Left cardiac atrium (tissue), 4 donors: ENCODE measurements at regions of chr7 and their contacts with region 1.

Region 1: GRCh38 chr7:158818325-158819213 is 10.7 kb downstream of the ESYT2 start:
- DNase-seq: peak; percentile 94
- ATAC-seq: peak; percentile 82 to 92

Region 2: DNA sequence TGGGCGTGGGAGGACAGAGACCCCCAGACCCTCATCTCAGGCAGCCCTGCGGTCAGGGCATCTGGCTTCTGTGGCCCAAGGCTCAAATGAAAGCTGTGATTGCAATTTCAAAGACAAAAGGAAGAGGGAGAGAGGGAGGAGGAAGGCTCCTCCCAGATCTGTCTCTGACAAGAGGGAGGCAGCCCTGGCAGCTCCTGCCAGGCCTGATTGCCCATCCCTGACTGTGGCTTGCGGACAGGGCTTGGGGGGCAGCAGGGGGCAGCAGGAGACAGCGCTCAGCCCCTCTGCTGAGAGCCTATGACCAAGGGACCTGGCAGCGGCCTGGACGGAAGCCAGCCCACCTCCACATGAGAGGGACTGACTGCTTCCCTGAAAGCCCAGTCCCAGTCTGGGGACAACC is 322.8 kb before region 1 on chr7:
- intact Hi-C with region 1: no loop called
- DNase-seq: no peak
- ATAC-seq: peak in 1 of 2 donors; percentile 41

Region 3: GRCh38 chr7:158863611-158864506 is 45.3 kb after region 1 on chr7:
- intact Hi-C with region 1: loop called in 1 of 2 experiments (anchors 5 kb)
- DNase-seq: peak; percentile 88
- ATAC-seq: peak; percentile 81 to 89

Region 4: DNA sequence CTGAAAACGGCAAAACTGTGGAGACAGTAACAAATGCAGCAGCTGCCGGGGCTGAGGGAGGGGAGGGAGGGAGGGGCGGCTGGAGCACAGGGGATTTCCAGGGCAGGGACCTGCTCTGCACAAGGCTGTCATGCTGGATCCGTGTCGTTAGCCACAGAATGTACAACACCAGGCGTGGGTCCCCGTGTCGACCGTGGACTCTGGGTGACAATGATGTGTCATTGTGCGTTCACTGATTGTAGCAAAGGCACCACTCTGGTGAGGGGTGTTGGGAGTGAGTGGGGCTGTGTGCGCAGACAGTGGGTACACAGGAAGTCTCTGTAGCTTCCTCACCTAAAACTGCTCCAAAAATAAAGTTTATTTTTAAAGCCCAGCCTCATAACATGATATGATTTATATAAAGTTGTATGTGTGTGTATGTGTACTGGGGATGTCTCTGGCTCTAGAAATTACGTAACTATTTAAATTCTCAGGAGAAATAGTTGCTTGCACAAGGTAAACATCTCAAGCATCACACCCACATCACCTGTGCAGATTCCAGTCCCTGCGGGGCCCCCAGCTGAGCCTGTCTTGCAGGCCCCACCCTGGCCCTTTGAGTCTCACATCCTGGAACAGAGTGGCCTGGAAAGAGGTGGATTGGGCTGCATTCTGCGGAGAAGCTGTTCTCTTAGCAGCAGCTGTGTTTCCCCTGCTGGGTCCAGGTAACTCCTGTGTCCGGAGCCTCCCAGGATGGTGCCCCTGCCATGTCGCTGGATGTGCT is 173.4 kb after region 1 on chr7:
- intact Hi-C with region 1: no loop called
- DNase-seq: no peak
- ATAC-seq: no peak